Panc1 (cell line): ENCODE measurements at regions of chr11 and their contacts with region 1.

Region 1: GRCh38 chr11:72040726-72041441 is 39.5 kb downstream of the NUMA1 start:
- DNase-seq: no peak
- ATAC-seq: peak; percentile 76
- H3K4me3 ChIP-seq: peak overlapping the region; percentile 59 to 72
- H3K27ac ChIP-seq: peak overlapping the region; percentile 90
- H3K4me1 ChIP-seq: peaks cover 37% of the 10 kb centered on the region
- H3K27me3 ChIP-seq: no peaks in the 10 kb centered on the region
- CTCF ChIP-seq: no peak

Region 2: GRCh38 chr11:72058416-72059034 is 17.6 kb after region 1 on chr11:
- CTCF ChIA-PET with region 1: no interaction called
- POLR2A ChIA-PET with region 1: interaction called, 19 read pairs
- in situ Hi-C with region 1: no loop called
- intact Hi-C with region 1: no loop called
- DNase-seq: no peak
- ATAC-seq: no peak
- H3K4me3 ChIP-seq: no peak overlapping the region
- H3K27ac ChIP-seq: no peak overlapping the region
- H3K4me1 ChIP-seq: no peaks in the 10 kb centered on the region
- H3K27me3 ChIP-seq: no peaks in the 10 kb centered on the region
- CTCF ChIP-seq: no peak

Region 3: DNA sequence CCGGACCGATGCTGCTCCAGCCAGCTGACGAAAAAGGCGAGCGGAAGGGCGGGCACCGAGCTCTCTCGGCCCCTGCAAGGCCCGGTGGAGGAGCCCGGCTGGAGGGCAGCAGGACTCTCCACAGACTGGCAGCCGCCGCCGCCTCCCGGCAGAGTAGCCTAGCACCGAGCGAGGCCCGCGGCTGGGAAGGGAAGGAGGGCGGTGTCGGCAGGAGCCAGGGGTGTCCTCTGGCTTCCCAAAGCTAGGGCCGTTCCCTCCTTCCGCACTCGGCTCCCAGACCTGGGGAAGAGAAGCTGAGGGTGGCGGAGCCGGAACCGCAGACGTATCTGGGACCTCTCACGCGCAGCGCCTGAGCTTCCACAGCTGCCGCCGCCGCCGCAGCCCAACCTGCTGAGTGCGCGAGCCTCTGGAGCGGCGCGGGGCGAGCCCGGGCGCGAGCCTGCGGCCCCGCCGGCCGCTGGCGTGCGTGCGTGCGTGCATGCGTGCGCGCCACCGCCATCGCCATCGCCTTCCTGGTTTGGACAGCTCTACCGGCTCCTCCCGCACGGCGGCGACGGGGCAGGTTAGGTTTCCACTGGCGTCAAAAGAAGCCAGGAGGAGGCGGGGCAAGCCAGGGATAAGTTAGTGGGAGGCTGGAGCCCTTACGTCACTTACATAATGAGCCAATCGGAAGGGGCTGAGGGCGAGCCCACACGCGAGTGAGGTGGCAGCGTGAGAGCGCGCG is 1720.0 kb after region 1 on chr11 and contains the start of gene RAB6A:
- CTCF ChIA-PET with region 1: no interaction called
- POLR2A ChIA-PET with region 1: no interaction called
- in situ Hi-C with region 1: no loop called
- intact Hi-C with region 1: no loop called
- DNase-seq: peak; percentile 95
- ATAC-seq: peak; percentile 95
- H3K4me3 ChIP-seq: peak within 1 kb of the TSS; percentile 58 to 85
- H3K27ac ChIP-seq: peak within 1 kb of the TSS; percentile 89
- H3K4me1 ChIP-seq: peaks cover 19% of the 10 kb centered on the region; the same call in 1 of the 2 replicates
- H3K27me3 ChIP-seq: no peaks in the 10 kb centered on the region; the same call in 1 of the 2 replicates
- CTCF ChIP-seq: no peak
- total RNA-seq, gene RAB6A: 149 TPM